Activated naive CD4-positive, alpha-beta T cell treated with anti-CD3 and anti-CD28 coated beads for 36 hours (primary cell): ENCODE measurements at regions of chr1 and their contacts with region 1.

Region 1: GRCh38 chr1:40438391-40439015 is 11.8 kb upstream of the ZFP69B start:
- DNase-seq: peak; percentile 33
- H3K4me3 Mint-ChIP-seq: no peak overlapping the region
- H3K27ac Mint-ChIP-seq: no peak overlapping the region
- H3K4me1 Mint-ChIP-seq: peaks cover 6% of the 10 kb centered on the region
- H3K27me3 Mint-ChIP-seq: no peaks in the 10 kb centered on the region

Region 2: DNA sequence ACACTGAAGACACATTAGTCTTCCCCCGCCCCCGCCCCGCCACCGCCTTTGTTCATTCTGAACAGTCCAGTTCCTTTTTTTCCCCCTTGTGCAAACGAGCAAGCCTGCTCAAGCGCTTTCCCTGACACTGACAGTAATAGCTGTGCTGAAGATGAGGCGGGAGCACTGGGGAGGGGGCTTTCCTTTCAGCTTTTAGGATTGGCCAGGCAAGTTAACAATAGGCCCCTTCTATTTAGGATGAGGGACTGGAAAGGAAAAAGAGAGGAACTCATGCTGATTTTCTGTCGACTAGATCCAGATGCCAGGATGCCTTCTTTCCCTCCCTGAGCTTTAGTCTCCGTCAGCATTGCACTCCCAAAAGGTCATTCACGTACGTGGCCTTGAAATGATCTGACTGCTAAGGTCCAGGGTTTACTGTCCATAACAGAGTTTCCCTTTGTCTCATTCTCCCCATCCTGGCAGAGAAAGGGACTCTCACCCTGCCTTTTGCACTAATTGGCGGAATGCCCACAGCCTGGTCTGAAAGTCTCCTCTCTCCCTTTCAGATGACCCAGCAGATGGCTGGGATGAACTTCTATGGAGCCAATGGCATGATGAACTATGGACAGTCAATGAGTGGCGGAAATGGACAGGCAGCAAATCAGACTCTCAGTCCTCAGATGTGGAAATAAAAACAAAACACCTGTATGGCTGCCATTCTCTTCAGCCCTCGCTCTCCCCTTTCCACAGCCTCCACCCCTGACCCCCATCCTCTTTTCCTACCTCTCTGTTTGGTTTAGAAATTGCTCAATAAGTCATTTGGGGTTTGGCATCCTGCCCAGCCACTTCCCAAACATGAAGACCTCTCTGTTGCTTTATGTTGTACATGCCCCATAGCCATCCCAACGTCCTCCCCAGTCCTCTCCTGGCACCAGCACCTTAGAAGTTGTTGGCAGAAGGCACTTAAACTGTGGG is 16.8 kb before region 1 on chr1:
- CTCF ChIA-PET with region 1: interaction called, 13 read pairs
- intact Hi-C with region 1: no loop called
- DNase-seq: no peak
- H3K4me3 Mint-ChIP-seq: no peak overlapping the region
- H3K27ac Mint-ChIP-seq: peak overlapping the region; percentile 59
- H3K4me1 Mint-ChIP-seq: peaks cover 15% of the 10 kb centered on the region
- H3K27me3 Mint-ChIP-seq: no peaks in the 10 kb centered on the region